Dorsolateral prefrontal cortex (tissue), 120 donors: ENCODE measurements at regions of chr18 and their contacts with region 1.

Region 1: DNA sequence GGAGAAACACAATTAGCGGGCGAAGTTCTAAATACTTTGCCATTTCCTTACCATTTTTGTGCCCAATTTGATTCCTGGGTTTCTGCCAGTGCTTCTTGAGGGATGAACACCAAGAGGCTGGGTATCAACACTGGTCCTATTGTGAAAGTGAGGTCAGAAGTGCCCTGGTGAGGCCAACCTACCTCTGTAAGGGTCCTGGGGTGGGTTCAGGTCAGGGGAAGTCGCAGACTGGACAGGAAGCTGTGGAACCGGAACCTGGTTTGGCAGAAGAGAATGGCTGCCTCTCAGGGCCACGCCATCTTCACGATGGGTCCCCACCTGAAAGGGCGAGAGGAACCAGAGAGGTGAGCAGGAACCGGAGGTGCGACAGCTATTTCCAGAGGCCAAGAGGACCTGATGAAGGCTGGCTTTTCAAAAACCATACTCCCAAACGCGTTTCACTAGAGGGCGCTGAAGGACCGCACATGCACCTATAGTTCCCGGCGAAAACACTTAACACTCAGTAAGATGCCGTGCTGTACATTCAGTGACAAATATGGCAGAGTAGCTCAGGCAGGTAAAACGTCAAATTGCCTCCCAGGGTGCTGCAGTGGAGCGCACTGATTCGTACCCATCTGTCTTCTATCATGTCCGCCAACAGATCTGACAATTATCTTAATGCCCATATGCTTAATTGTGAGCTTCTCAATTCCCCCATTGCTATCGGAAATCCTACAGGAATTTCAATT is 275.3 kb upstream of the CCDC68 start:
- DNase-seq: peak; percentile 75 to 91 (median 84)
- H3K4me3 ChIP-seq: peak overlapping the region in 31 of 59 donors; percentile 2 to 46 (median 21)
- H3K27ac ChIP-seq: peak overlapping the region in 58 of 59 donors; percentile 32 to 89 (median 74)
- H3K27me3 ChIP-seq: no peaks in the 10 kb centered on the region
- CTCF ChIP-seq: peak; percentile 60 to 93 (median 87)

Region 2: GRCh38 chr18:55096261-55096951 is 138.1 kb before region 1 on chr18:
- intact Hi-C with region 1: loop called in 1 of 2 experiments (anchors 5 kb)
- DNase-seq: peak; percentile 35 to 72 (median 59)
- H3K4me3 ChIP-seq: no peak overlapping the region
- H3K27ac ChIP-seq: peak overlapping the region in 1 of 59 donors; percentile 28
- H3K27me3 ChIP-seq: no peaks in the 10 kb centered on the region
- CTCF ChIP-seq: peak in 53 of 56 donors; percentile 17 to 70 (median 55)

Region 3: GRCh38 chr18:55384551-55385275 is 150.2 kb after region 1 on chr18:
- intact Hi-C with region 1: loop called in 1 of 2 experiments (anchors 10 kb)
- DNase-seq: peak in 2 of 10 donors; percentile 51 to 58
- H3K4me3 ChIP-seq: peak overlapping the region in 1 of 59 donors; percentile 1
- H3K27ac ChIP-seq: peak overlapping the region in 58 of 59 donors; percentile 50 to 92 (median 84)
- H3K27me3 ChIP-seq: no peaks in the 10 kb centered on the region
- CTCF ChIP-seq: peak; percentile 34 to 79 (median 68)

Region 4: GRCh38 chr18:55589625-55590291 is 355.2 kb after region 1 on chr18:
- intact Hi-C with region 1: loop called (anchors 5 to 10 kb)
- DNase-seq: peak; percentile 92 to 96 (median 94)
- H3K4me3 ChIP-seq: peak overlapping the region; percentile 50 to 86 (median 72)
- H3K27ac ChIP-seq: peak overlapping the region; percentile 71 to 99 (median 96)
- H3K27me3 ChIP-seq: no peaks in the 10 kb centered on the region
- CTCF ChIP-seq: peak in 50 of 56 donors; percentile 4 to 63 (median 46)

Region 5: GRCh38 chr18:56575819-56576663 is 1341.5 kb after region 1 on chr18:
- intact Hi-C with region 1: loop called (anchors 10 kb)
- DNase-seq: peak in 1 of 10 donors; percentile 11
- H3K4me3 ChIP-seq: peak overlapping the region in 11 of 59 donors; percentile 1 to 41 (median 14)
- H3K27ac ChIP-seq: peak overlapping the region in 18 of 59 donors; percentile 3 to 57 (median 21)
- H3K27me3 ChIP-seq: no peaks in the 10 kb centered on the region
- CTCF ChIP-seq: peak; percentile 69 to 94 (median 83)